ENCODE measurements at regions of chr13 and their contacts with region 1.

Region 1: GRCh38 chr13:29522044-29522685 is 73.3 kb downstream of the SLC7A1 start:
- DNase-seq: peak in 1 of 3 donors; percentile 48
- ATAC-seq: peak; percentile 9 to 46
- H3K4me3 ChIP-seq: no peak overlapping the region
- H3K27ac ChIP-seq: peak overlapping the region; percentile 11
- H3K4me1 ChIP-seq: peaks cover 6% of the 10 kb centered on the region
- H3K27me3 ChIP-seq: no peaks in the 10 kb centered on the region

Region 2: DNA sequence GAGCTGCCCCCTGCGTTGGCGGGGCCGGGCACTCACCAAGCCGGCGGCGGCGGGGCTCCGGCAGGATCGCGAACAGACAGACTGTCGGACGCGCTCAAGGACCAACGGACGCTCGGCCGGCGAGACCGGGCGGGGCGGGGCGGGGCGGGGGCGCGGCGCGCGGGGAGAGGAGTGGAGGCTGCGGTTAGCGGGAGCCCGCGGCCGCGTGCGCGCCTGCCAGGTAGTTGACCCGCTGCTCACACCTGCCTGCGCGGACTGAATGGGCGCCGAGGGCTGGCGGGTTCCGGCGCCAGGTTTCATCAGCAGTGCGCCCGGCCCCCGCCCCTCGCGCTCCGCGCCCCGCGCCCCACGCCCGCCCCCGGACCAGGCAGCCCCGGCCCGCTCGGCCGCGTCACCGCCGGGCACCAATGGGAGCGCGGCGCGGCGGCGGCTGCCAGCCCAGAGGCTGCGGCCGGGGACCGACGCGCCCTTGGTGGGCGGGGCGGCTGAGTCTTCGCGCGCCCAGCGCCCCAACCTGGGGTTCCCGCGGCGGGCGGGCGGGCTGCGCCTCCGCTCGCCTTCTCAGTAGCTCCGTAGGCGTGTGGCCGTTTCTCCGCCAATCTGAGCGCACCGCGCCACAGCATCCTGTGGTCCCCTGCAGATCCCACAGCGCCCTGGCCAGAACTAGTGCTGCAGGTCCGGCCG is 73.4 kb after region 1 on chr13 and contains the start of gene SLC7A1:
- intact Hi-C with region 1: loop called in 1 of 4 experiments (anchors 10 kb)
- DNase-seq: peak; percentile 83 to 91 (median 90)
- ATAC-seq: peak; percentile 92 to 95
- H3K4me3 ChIP-seq: peak within 1 kb of the TSS; percentile 88
- H3K27ac ChIP-seq: peak within 1 kb of the TSS; percentile 65
- H3K4me1 ChIP-seq: no peaks in the 10 kb centered on the region
- H3K27me3 ChIP-seq: no peaks in the 10 kb centered on the region
- total RNA-seq, gene SLC7A1: 10.4 to 43.1 (median 13.9) TPM

Region 3: DNA sequence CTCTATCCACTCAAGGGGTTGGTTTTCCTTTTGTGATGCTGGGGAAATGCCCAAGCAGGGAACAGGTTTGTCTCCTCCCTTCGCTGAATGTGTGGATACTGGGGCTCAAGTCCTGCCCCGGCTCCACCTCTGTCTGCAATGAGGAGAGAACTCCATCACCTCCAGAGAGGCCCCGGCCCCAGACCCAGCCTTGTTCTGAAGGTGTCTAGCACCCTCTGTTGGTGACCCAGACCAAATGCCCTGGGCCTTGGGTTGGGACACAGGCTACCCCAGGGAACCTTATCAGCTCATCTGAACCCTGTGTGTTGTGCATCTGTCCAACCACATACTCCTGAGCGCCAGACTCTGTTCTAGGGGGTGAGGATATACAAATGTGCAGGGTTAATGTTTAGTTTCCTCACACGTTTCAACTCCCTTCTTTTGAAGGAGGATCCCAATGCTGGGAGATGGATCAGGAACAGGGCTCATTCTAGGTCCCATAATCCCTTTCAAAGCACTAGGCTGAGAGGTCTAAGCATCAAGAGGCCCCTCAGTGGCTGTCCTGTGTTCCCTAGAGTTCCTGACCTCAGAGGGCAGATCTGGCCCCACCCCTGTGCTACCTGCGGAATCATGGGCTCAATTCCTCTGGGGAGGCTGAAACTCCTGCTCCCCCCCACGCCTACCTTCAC is 185.8 kb after region 1 on chr13:
- intact Hi-C with region 1: loop called in 1 of 4 experiments (anchors 10 kb)
- DNase-seq: peak in 2 of 3 donors; percentile 26 to 59
- ATAC-seq: peak; percentile 55 to 66
- H3K4me3 ChIP-seq: no peak overlapping the region
- H3K27ac ChIP-seq: no peak overlapping the region
- H3K4me1 ChIP-seq: peaks cover 4% of the 10 kb centered on the region
- H3K27me3 ChIP-seq: no peaks in the 10 kb centered on the region

Measured in right cardiac atrium (tissue), 5 donors.